K562 (cell line): ENCODE measurements at regions of chr19 and their contacts with region 1.

Region 1: GRCh38 chr19:54674021-54674617 is 11.3 kb downstream of the LILRB4 start:
- DNase-seq: peak; percentile 54 to 75 (median 56)
- ATAC-seq: peak; percentile 83
- H3K4me3 ChIP-seq: no peak overlapping the region
- H3K27ac ChIP-seq: no peak overlapping the region
- H3K4me1 ChIP-seq: no peaks in the 10 kb centered on the region
- H3K27me3 ChIP-seq: peaks cover 2 to 19% of the 10 kb centered on the region in 2 experiments; a peak in 4 of 5 replicates
- CTCF ChIP-seq: peak; percentile 60 to 89 (median 76); a peak in 5 of 6 replicates
- EP300 ChIP-seq: no peak
- POLR2A ChIP-seq: no peak
- RAD21 ChIP-seq: peak; percentile 51 to 76

Region 2: GRCh38 chr19:54481322-54481930 is 192.7 kb before region 1 on chr19:
- CTCF ChIA-PET with region 1: interaction called, 8 read pairs
- POLR2A ChIA-PET with region 1: no interaction called
- in situ Hi-C with region 1: loop called (anchors 10 kb)
- intact Hi-C with region 1: loop called (anchors 2 kb)
- DNase-seq: peak; percentile 49 to 66 (median 51)
- ATAC-seq: peak; percentile 81
- H3K4me3 ChIP-seq: no peak overlapping the region
- H3K27ac ChIP-seq: no peak overlapping the region
- H3K4me1 ChIP-seq: no peaks in the 10 kb centered on the region; a peak in 1 of 5 replicates
- H3K27me3 ChIP-seq: peaks cover 6 to 17% of the 10 kb centered on the region in 2 experiments; a peak in 4 of 5 replicates
- CTCF ChIP-seq: peak; percentile 67 to 89 (median 77)
- EP300 ChIP-seq: no peak
- POLR2A ChIP-seq: no peak
- RAD21 ChIP-seq: peak; percentile 42 to 76

Region 3: DNA sequence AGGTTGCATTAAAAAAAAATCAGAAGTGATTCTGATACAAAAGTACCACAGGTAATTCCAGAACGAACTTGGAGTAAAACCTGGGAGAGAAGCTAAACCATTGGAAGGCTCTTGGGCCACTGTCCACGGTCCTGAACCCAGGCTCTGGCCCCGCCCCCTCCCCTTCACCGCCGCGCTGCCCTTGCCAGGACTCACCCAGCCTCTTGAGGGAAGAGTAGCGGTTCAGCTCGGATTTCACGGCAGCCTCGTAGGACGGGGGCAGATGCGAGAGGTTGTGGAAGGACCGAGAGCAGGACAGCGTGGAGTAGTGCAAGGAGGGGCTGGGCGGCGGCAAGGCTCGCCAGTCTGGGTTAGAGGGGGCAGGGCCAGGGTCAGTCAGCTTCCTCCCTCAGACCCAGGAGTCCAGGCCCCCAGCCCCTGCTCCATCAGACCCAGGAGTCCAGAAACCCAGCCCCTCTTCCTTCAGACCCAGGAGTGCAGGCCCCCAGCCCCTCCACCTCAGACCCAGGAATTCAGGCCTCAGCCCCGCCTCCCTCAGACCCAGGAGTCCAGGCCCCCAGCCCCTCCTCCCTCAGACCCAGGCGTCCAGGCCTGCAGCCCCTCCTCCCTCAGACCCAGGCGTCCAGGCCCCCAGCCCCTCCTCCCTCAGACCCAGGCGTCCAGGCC is 763.4 kb after region 1 on chr19:
- CTCF ChIA-PET with region 1: no interaction called
- POLR2A ChIA-PET with region 1: no interaction called
- in situ Hi-C with region 1: loop called (anchors 25 kb)
- intact Hi-C with region 1: no loop called
- DNase-seq: peak; percentile 78 to 86 (median 83)
- ATAC-seq: peak; percentile 75
- H3K4me3 ChIP-seq: no peak overlapping the region
- H3K27ac ChIP-seq: no peak overlapping the region
- H3K4me1 ChIP-seq: peaks cover 10 to 43% of the 10 kb centered on the region in 2 experiments
- H3K27me3 ChIP-seq: peaks cover 0 to 9% of the 10 kb centered on the region in 2 experiments; a peak in 2 of 5 replicates
- CTCF ChIP-seq: no peak
- EP300 ChIP-seq: no peak
- POLR2A ChIP-seq: no peak
- RAD21 ChIP-seq: no peak